AG04450 (cell line): ENCODE measurements at regions of chr11 and their contacts with region 1.

Region 1: GRCh38 chr11:94623120-94623735 is 56.1 kb downstream of the PIWIL4 start:
- DNase-seq: peak; percentile 46
- H3K4me3 ChIP-seq: no peak overlapping the region
- H3K27ac ChIP-seq: no peak overlapping the region
- H3K27me3 ChIP-seq: peaks cover 2% of the 10 kb centered on the region
- CTCF ChIP-seq: peak; percentile 90

Region 2: DNA sequence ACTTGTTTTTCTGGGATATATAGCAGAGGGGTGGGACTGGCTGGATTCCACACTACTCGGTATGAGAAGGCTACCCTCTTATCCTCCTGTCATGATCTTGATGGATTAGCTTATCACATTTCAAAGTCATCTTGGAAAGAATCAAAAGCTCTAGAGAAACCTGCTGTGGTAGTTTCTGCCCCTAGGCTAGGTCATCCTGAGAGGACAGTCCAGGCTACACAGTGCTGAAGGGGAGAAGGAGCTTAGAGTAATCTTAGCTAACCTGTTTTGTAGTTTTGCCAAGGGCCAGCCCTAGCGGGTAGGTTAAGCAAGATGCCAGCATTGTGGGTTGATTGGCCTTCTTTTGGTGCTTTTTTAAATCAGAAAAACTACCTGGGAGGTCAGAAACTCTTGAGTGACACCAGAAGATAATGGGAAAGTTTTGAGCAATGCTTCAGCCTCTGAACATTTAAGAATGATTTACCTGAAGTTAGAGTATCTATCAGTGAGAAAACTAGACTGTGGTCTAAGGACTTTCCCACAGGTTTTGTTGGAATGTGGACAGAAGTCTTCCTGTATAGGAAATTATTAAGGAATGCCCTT is 34.8 kb before region 1 on chr11:
- CTCF ChIA-PET with region 1: no interaction called
- POLR2A ChIA-PET with region 1: no interaction called
- DNase-seq: no peak
- H3K4me3 ChIP-seq: no peak overlapping the region
- H3K27ac ChIP-seq: no peak overlapping the region
- H3K27me3 ChIP-seq: no peaks in the 10 kb centered on the region
- CTCF ChIP-seq: no peak

Region 3: DNA sequence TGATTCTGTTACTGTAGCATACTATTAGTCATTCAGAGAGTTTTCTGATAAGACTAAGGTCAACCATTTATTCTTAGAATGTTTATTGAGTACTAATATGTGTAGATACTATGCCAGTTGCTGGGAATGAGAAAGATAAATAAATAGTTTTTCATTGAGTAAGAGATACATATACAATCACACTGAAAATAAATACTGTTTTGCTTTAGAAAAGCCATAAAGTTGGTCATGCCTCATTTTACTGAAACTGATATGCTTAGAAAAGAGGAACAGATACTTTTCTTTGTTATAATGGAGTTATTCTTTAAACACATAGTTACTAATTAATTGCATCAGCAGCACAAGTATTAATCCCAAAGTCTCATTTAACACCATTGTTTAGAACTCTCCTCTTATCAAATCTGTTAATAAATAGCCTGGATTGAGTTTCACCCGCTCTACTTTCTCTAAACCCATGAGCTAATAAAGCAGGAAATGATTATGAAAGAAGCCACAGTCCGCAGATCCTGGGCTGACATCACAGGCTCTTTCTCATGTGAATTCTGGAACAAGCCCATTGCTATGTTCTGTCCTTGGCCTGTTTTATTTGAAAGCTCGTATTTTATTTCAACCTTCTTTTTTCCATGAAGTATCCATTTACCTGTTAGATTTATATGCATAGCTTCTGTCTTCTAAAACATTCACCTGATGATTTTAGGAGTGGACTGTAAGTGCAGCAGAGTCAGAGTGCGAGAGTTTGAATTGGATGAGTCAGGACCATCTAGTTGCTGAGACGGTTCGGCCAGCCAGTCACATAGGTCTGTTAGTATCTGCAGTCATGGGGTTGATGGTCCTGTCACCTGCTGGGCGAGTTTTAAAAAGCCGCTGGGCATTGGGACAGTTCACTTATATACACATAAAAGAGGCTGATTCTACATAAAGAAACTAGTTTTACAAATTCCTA is 20.5 kb before region 1 on chr11:
- CTCF ChIA-PET with region 1: interaction called, 14 read pairs
- POLR2A ChIA-PET with region 1: no interaction called
- DNase-seq: peak; percentile 81
- H3K4me3 ChIP-seq: no peak overlapping the region
- H3K27ac ChIP-seq: no peak overlapping the region
- H3K27me3 ChIP-seq: no peaks in the 10 kb centered on the region
- CTCF ChIP-seq: peak; percentile 78

Region 4: DNA sequence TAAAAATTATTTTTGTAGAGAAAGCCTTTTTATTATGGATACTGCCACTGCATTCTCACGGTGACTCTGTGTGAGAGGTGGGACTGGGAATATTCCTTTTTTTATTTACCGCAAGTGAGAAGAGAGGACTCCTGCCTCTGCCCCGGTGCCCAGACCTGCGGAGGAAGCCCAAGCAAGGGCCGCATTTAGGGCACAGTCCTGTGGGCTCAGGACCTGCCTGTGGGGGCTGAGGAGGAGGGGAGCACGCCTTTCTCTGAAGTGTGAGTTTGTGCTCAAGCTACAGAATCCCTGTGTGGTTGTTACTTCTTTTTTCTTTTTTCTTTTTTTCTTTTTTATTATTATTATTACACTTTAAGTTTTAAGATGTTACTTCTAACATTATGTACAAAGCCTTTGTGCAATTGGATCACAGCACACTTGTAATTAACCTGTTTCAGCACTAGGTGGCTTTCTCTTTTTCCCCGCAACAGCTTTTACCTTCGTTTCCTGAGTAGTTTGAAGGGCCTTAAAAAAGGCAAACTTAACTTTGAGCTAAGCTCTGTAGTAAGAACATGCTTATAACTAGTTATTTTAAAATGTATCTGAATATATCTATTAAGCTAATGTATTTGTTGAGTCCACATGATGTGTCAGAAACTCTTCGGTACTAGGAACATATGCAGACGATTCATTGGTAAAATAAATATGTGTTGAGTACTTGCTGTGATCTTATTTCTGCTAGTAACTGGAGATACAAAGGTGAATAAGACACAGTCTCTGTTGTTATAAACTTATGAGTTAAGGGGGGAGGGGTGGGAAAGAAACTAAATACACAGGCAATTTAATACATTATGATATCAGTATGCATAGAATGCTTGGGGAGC is 163.3 kb after region 1 on chr11:
- CTCF ChIA-PET with region 1: interaction called, 10 read pairs
- POLR2A ChIA-PET with region 1: no interaction called
- DNase-seq: no peak
- H3K4me3 ChIP-seq: no peak overlapping the region
- H3K27ac ChIP-seq: no peak overlapping the region
- H3K27me3 ChIP-seq: no peaks in the 10 kb centered on the region
- CTCF ChIP-seq: peak; percentile 72

Region 5: GRCh38 chr11:94845622-94846021 is 222.4 kb after region 1 on chr11:
- CTCF ChIA-PET with region 1: interaction called, 11 read pairs
- POLR2A ChIA-PET with region 1: no interaction called
- DNase-seq: peak; percentile 66
- H3K4me3 ChIP-seq: no peak overlapping the region
- H3K27ac ChIP-seq: peak overlapping the region; percentile 74
- H3K27me3 ChIP-seq: no peaks in the 10 kb centered on the region
- CTCF ChIP-seq: no peak

Region 6: GRCh38 chr11:94897330-94897768 is 274.1 kb after region 1 on chr11:
- CTCF ChIA-PET with region 1: interaction called, 101 read pairs
- POLR2A ChIA-PET with region 1: no interaction called
- DNase-seq: no peak
- H3K4me3 ChIP-seq: no peak overlapping the region
- H3K27ac ChIP-seq: no peak overlapping the region
- H3K27me3 ChIP-seq: no peaks in the 10 kb centered on the region
- CTCF ChIP-seq: peak; percentile 96

Region 7: DNA sequence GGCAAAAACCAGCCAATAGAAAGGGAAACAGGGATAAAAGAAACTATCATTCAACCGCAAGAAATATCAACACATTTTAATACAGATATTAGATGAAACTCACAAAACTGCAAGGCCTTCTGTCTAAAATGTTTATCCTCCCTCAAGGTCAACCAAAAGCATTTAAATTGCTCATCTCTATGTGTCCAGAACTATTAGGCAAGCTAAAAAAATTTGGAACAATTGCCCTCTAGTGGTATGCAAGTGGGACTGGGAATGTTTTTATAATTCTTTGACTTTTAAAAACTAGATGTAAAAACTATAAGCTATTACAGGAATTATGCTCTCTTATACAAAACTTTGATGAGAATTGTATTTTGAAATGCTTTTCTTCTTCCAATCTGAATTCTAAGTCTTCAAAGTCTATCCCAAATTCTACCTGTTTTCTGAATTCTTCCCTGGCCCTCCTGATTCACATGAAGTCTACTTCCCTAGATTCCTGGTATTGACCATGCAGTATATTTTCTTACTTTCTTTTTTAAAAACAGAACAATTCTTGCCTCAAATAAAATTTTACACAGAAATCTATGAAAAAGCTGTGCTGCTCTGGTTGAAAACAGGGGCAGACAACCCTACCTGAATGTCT is 345.2 kb after region 1 on chr11:
- CTCF ChIA-PET with region 1: interaction called, 173 read pairs
- POLR2A ChIA-PET with region 1: no interaction called
- DNase-seq: no peak
- H3K4me3 ChIP-seq: no peak overlapping the region
- H3K27ac ChIP-seq: no peak overlapping the region
- H3K27me3 ChIP-seq: no peaks in the 10 kb centered on the region
- CTCF ChIP-seq: peak; percentile 74